Activated T-helper 1 cell treated with anti-CD3 and anti-CD28 coated beads, Interleukin-12 subunit alpha, Interleukin-12 subunit beta, Interleukin-2, Interleukin-4 antibody, amounts not matched to agents 30 ng/mL and 10 ng/mL and 1 ng/mL, durations not matched to agents 14 hours and 24 hours and 36 hours (primary cell): ENCODE measurements at regions of chr10 and their contacts with region 1.

Region 1: DNA sequence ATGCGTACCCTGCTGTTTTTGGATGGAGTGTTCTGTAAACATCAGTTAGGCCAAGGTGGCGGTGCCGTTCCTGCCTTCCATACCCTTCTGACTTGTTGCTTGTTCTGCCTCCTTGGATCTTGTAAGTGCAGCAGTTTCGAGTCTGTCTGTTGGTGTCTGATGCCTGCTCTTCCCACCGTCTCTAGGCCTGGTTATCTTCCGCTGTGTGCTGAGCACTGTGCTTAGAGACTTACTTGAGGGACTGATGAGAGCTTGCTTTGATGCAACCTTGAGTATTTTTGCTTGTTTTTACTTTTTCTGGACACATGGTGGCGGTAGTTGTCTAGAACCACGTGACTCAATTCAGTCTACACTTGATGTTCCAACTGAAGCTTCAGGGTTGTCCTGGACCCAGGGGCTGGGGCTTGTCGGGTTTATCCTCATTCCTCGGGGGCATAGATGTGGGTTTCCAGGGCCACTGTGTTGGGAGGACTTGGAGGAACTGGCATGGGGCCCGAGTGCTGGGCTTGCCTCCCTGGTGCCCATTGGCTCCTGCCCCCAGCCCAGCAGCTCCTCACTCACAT is 14.4 kb upstream of the SPRN start:
- DNase-seq: no peak
- H3K4me3 Mint-ChIP-seq: no peak overlapping the region
- H3K27ac Mint-ChIP-seq: no peak overlapping the region
- H3K4me1 Mint-ChIP-seq: peaks cover 6% of the 10 kb centered on the region
- H3K27me3 Mint-ChIP-seq: peaks cover 11% of the 10 kb centered on the region

Region 2: DNA sequence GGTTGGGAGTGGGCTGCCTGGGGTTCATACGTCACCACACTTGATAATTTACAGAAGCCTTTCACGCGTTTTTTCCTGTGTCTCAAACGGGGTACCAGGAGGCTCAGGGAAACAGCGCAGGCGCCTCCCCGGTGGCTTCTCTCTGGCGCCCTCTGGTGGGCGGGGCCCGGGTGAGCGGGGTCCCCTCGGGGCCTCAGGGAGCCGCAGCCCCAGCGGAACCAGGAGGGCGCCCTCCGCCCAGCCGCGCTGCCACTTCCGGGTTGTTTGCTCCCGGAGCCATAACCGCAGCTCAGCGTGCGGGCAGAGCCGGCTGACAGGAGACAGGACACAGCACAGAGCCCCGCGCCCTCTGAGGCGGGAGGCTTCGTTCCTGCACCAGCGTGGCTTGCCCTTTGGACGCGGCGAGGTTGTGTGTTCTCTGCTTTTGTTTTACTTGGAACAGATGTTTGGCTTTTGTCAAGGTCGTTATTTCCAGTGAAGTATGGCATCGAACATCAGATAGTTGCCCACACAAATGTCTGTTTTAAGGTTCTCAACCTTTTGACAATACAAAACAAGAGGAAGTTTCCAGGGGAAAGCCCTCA is 81.5 kb after region 1 on chr10:
- intact Hi-C with region 1: loop called (anchors 1 kb)
- DNase-seq: peak; percentile 80
- H3K4me3 Mint-ChIP-seq: peak overlapping the region; percentile 58
- H3K27ac Mint-ChIP-seq: no peak overlapping the region
- H3K4me1 Mint-ChIP-seq: peaks cover 5% of the 10 kb centered on the region
- H3K27me3 Mint-ChIP-seq: peaks cover 39% of the 10 kb centered on the region